BJ (cell line): ENCODE measurements at regions of chr7 and their contacts with region 1.

Region 1: DNA sequence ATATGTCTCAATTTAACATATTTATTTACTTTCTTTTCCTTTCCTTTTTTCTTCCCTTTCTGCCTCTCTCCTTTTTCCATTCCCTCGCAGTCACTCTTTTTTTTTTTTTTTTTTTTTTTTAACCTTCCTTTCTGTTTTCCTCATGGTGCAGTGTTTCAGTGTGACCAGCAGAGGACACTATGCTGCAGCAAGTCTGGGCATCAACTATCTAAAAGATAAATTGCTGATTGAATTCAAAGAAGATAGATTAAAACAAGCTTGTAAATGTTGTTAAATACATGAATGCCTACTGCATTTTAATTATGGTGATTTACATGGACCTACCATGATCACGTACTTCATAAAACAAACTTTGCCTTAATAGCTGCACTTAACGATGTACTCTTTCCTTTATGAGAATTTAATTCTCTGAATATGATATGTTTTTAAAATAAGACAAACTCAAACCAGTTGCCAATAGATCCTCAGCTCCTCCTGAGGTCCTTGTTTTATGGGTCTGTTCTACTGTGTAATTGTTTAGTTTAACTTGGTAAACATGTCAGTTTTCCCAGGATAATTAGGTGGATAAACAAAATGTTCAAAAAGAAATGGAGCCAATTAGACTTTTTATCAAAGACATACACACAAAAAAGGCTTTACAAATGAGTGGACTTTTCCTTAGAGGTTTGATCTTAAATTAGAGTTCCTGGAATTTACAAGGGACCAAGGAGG is 101.0 kb upstream of the AGR3 start:
- DNase-seq: no peak
- H3K4me3 ChIP-seq: no peak overlapping the region
- H3K27me3 ChIP-seq: no peaks in the 10 kb centered on the region
- CTCF ChIP-seq: peak; percentile 95

Region 2: DNA sequence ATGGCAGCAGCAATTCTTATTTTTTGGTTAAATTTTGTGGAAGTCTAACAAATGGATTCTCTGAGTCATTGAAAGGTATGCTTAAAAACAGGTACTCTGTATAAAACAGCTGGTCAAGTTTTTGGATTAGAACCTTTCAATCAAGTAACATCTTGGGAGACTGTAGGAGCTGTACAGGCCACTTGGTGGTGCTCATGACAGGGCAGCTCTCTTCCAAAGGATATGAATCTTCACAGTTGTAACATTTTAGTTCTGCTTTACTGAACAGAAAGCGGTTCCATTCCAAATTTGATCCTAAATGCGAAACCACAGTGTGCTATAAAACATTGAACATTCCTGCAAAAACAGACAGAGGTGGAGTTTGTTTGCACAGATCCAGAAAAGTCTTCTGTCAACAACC is 56.5 kb before region 1 on chr7:
- CTCF ChIA-PET with region 1: interaction called, 10 read pairs
- POLR2A ChIA-PET with region 1: no interaction called
- DNase-seq: no peak
- H3K4me3 ChIP-seq: no peak overlapping the region
- H3K27me3 ChIP-seq: no peaks in the 10 kb centered on the region
- CTCF ChIP-seq: peak; percentile 86

Region 3: GRCh38 chr7:17181482-17181881 is 198.7 kb after region 1 on chr7:
- CTCF ChIA-PET with region 1: no interaction called
- POLR2A ChIA-PET with region 1: no interaction called
- DNase-seq: no peak
- H3K4me3 ChIP-seq: no peak overlapping the region
- H3K27me3 ChIP-seq: no peaks in the 10 kb centered on the region
- CTCF ChIP-seq: no peak

Region 4: DNA sequence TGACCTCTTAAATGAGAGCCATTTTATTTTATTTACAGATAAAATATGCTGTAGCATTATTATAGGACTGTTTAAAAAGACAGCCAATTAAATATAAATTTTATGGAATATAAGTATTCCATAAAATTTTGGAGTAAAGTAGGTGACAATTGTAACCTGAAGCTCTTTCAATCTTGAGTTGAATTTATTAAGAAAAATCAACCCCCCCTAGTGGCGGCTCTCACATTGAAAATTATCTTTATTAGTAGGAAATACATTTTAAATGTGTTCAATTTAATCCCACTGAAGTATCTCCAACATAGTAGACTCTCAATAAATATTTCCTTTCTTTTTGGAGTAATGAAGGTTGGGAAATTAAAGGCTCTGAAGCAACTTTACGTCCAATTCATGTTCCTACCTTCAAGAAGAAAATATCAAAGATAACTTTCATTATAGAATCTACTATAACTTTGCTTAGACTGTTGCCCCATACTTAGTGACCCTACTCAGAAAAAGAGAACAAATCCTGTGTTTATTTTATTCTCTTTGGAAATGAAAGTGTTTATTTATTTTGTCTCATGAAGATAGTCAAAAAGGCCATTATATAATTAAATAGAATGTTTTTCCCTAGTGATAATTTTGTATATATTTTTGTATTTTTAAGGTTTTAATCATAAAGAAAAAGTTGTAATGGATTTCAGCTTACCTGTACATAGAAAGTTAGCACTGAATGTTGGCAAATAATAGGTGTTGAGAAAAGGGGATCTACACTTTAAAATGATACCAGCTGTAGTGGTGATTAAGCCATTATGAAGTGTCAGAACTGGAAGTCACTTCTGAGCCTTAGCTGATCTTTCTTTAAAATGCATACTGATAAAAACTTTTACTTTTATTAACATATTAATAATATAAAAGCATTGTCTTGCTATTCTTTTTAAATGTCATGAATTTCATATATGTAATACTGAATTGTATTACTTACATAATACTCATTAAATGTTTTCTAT is 319.0 kb after region 1 on chr7:
- CTCF ChIA-PET with region 1: interaction called, 21 read pairs
- POLR2A ChIA-PET with region 1: no interaction called
- DNase-seq: no peak
- H3K4me3 ChIP-seq: peak overlapping the region; percentile 98; the same call in 1 of the 2 replicates
- H3K27me3 ChIP-seq: no peaks in the 10 kb centered on the region
- CTCF ChIP-seq: peak; percentile 47

Region 5: GRCh38 chr7:17501441-17502210 is 518.8 kb after region 1 on chr7:
- CTCF ChIA-PET with region 1: no interaction called
- POLR2A ChIA-PET with region 1: interaction called, 11 read pairs
- DNase-seq: peak; percentile 19
- H3K4me3 ChIP-seq: no peak overlapping the region
- H3K27me3 ChIP-seq: no peaks in the 10 kb centered on the region
- CTCF ChIP-seq: no peak

Region 6: DNA sequence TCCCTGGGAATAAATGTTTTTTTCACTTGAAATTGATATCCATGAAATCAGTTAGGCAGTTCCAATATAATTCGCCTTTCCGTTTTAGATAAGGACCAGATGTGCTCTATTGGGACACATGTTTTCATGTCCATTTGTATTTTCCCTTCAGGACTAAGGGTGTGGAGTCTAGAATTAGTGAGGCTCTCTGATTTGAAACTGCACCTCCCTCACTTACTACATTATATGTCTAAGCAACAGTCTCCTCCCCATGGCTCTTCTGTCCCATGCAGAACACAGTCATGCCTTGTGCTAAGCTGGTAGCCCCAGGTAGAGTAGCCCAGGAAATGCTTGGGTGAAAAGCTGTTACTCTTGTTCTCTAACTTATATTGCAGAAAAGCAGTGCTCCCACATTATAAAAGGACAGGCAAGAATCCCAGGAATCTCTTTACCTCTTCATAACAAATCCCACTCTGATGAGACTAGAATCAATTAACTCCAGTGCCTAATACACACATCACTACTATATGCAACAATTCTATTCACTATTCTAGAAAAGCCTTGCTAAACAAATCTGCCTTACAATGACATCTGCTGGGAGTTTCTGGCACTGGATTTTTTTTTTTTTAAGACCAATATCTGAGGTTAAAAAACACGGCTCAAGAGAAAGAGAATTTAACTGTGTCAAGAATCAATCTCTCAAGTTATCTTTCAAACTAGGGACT is 663.6 kb after region 1 on chr7:
- CTCF ChIA-PET with region 1: interaction called, 18 read pairs
- POLR2A ChIA-PET with region 1: no interaction called
- DNase-seq: no peak
- H3K4me3 ChIP-seq: no peak overlapping the region
- H3K27me3 ChIP-seq: no peaks in the 10 kb centered on the region
- CTCF ChIP-seq: peak; percentile 47